ENCODE measurements at regions of chr11 and their contacts with region 1.

Region 1: DNA sequence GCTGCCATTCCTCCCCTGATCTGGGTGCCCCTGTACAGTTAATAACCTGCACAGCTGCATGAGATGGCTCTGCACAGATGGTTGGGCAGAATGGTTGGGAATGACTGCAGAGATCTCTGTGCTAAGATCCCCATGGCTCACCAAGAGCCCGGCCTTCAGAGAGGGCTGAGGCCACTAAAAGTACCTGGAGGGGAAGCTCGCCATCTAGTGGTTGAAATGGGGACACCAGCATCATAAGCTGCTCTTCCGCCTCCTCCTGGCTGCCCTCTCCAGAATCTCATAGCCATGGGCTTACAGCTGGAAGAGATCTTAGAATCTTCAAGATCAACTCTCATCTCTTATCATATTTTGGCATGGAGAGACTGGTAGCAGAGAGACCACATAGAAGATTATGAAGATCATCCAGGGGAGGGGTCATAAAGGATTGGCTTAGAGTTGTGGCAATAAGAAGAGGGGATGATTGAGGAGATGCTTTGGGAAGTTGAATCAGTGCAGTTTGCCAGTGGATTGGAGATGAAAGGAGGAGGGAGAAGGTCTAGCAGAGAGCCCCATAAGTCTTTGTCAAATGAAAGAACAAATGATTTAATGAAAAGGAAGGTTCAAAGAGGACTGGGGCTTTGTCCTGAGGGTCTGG is 22.0 kb upstream of the TLCD5 start:
- DNase-seq: peak; percentile 51
- H3K4me3 ChIP-seq: no peak overlapping the region
- H3K27ac ChIP-seq: no peak overlapping the region
- H3K4me1 ChIP-seq: peaks cover 6% of the 10 kb centered on the region
- H3K27me3 ChIP-seq: peaks cover 32% of the 10 kb centered on the region
- CTCF ChIP-seq: peak; percentile 95

Region 2: DNA sequence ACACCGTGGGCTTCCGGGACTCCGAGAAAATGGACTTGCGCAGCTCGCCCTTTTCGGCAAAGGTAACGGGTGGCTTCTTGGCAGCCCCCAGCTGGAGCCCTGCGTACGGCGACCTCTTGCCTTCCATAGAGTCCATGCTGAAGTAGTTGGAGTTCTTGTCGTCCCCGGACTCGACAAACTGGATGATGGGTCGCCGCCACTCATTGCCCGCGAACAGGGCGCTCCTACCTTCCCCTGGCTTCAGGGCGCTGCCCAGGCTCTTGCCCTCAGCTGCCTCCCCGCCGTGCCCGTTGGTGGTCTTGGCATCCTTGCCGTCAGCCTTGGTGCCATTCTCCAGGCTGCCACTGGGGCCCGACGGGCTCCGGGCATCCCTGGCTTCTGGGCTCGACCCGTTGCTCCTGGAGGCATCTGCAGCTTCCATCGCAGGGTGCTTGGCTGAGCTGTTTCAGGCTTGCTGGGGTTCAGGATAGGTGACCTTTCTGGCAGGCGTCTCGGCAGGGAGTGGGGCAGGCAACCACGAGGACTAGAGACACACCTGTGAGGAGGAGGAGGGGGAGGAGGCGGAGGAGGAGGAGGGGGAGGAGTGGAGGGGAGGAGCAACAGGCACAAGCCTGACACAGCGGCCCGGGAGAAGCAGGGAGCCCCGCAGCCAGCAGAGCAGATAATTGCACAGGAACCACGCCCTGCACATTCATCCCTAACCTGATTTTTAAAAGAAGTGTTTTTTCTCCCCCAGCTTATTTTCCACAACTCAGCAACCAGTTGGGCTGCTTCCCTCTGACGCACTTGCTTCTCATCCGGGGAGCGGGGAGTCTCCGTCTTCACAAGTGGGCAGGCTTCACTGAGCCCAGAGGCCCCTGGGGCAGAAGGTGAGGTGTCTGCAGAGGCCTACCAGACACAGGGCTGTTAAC is 165.3 kb before region 1 on chr11 and contains the start of gene TRIM29:
- intact Hi-C with region 1: no loop called
- DNase-seq: no peak
- H3K4me3 ChIP-seq: no peak within 1 kb of the TSS
- H3K27ac ChIP-seq: no peak within 1 kb of the TSS
- H3K4me1 ChIP-seq: no peaks in the 10 kb centered on the region
- H3K27me3 ChIP-seq: peaks cover 63% of the 10 kb centered on the region
- CTCF ChIP-seq: no peak
- total RNA-seq, gene TRIM29: not detected

Region 3: DNA sequence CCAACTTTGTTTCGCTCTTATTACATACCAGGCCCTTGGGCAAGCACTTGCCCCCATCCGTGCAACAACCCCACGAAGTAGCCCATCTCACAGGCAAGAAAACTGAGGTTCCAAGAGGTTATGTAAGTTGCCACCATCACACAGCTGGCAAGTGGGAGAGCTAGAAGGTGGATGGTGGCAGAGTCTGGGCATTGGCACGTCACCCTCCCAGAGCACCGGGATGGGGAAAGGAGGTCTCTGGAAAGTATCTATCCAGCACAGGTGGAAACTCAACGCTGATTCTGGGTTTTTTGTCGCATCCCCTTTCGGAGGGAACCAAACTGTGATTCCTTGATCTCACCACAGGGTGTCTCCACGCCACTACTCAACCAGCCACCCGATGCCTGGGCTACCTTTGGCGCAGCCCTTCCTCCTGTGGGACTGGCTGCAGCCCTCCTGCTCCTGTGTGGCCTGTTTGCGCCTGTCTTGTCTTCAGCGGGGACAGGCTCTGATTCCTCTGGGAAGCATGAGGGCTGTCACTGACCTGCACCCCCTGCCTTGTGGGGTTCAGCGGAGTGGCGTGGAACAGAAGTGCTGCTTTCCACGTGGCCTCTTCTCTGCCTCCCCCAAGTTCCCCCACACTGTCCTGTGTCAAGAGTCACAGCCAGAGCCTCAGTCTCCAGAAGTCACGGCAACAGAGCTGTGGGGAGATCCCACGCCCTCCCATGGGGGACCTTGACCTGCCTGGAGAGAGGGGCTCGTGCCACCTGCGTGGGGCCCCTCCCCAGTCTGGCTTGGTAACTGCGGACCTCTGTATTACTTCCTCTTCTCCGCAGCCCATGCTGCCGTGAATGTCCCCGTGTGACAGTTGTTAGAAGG is 130.8 kb before region 1 on chr11:
- intact Hi-C with region 1: loop called (anchors 5 kb)
- DNase-seq: peak; percentile 64
- H3K4me3 ChIP-seq: no peak overlapping the region
- H3K27ac ChIP-seq: no peak overlapping the region
- H3K4me1 ChIP-seq: peaks cover 21% of the 10 kb centered on the region
- H3K27me3 ChIP-seq: peaks cover 91% of the 10 kb centered on the region
- CTCF ChIP-seq: peak; percentile 92

Region 4: GRCh38 chr11:120229451-120230424 is 73.4 kb before region 1 on chr11:
- intact Hi-C with region 1: loop called (anchors 5 kb)
- DNase-seq: no peak
- H3K4me3 ChIP-seq: no peak overlapping the region
- H3K27ac ChIP-seq: peak overlapping the region; percentile 42
- H3K4me1 ChIP-seq: peaks cover 26% of the 10 kb centered on the region
- H3K27me3 ChIP-seq: peaks cover 42% of the 10 kb centered on the region
- CTCF ChIP-seq: peak; percentile 86

Region 5: GRCh38 chr11:120612513-120613263 is 309.6 kb after region 1 on chr11:
- intact Hi-C with region 1: no loop called
- DNase-seq: peak; percentile 61
- H3K4me3 ChIP-seq: no peak overlapping the region
- H3K27ac ChIP-seq: no peak overlapping the region
- H3K4me1 ChIP-seq: peaks cover 14% of the 10 kb centered on the region
- H3K27me3 ChIP-seq: peaks cover 25% of the 10 kb centered on the region
- CTCF ChIP-seq: no peak

Measured in left ventricle myocardium inferior (tissue), 1 donor.